ENCODE measurements at regions of chr18 and their contacts with region 1.

Region 1: GRCh38 chr18:59402432-59403090 is 43.5 kb upstream of the LMAN1 start:
- DNase-seq: peak; percentile 33 to 70 (median 43)
- H3K4me3 ChIP-seq: no peak overlapping the region
- H3K4me3 Mint-ChIP-seq: no peak overlapping the region
- H3K27ac ChIP-seq: no peak overlapping the region
- H3K27ac Mint-ChIP-seq: no peak overlapping the region
- H3K4me1 ChIP-seq: no peaks in the 10 kb centered on the region
- H3K4me1 Mint-ChIP-seq: peaks cover 0 to 4% (median 0%) of the 10 kb centered on the region in 3 donors
- H3K27me3 ChIP-seq: no peaks in the 10 kb centered on the region
- H3K27me3 Mint-ChIP-seq: no peaks in the 10 kb centered on the region

Region 2: DNA sequence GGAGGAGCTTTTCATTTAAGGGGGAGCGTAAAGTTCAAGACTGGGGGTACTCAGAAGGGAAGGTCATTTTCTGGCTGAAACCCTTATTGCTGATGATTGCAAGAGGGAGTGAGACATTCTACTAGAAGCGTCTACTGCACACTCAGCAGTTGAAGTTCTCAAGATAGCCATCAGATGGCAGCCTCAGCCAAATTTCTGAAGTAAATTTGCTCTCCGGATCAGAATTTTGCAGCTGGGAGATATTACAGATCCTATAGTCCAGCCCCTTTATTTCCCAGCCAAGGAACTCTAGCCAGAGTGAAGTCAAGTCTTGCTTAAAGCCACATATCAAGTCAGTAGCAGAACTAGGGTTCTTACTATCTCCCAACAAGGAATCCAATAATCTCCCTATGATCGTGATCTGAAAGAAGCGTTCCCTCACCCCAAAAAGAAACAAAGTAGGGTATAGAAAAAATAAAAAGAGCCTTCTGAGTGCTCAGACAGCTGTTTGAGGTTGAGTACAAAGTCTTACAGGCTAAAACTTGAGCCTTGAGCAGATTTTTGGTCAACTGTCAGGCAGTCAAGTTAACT is 153.3 kb before region 1 on chr18:
- CTCF ChIA-PET with region 1: interaction called, 17 read pairs
- POLR2A ChIA-PET with region 1: no interaction called
- DNase-seq: no peak
- H3K4me3 ChIP-seq: no peak overlapping the region
- H3K4me3 Mint-ChIP-seq: no peak overlapping the region
- H3K27ac ChIP-seq: no peak overlapping the region
- H3K27ac Mint-ChIP-seq: no peak overlapping the region
- H3K4me1 ChIP-seq: no peaks in the 10 kb centered on the region
- H3K4me1 Mint-ChIP-seq: no peaks in the 10 kb centered on the region
- H3K27me3 ChIP-seq: no peaks in the 10 kb centered on the region
- H3K27me3 Mint-ChIP-seq: peaks cover 14 to 50% of the 10 kb centered on the region in 2 donors

Region 3: GRCh38 chr18:59308248-59308937 is 94.2 kb before region 1 on chr18:
- CTCF ChIA-PET with region 1: interaction called, 69 read pairs
- POLR2A ChIA-PET with region 1: no interaction called
- DNase-seq: peak; percentile 37 to 59 (median 48)
- H3K4me3 ChIP-seq: no peak overlapping the region
- H3K4me3 Mint-ChIP-seq: peak overlapping the region in 6 of 7 donors; percentile 52 to 84 (median 60)
- H3K27ac ChIP-seq: no peak overlapping the region
- H3K27ac Mint-ChIP-seq: peak overlapping the region in 1 of 8 donors; percentile 60
- H3K4me1 ChIP-seq: no peaks in the 10 kb centered on the region
- H3K4me1 Mint-ChIP-seq: no peaks in the 10 kb centered on the region
- H3K27me3 ChIP-seq: peaks cover 19% of the 10 kb centered on the region
- H3K27me3 Mint-ChIP-seq: peaks cover 14 to 57% of the 10 kb centered on the region in 2 donors

Region 4: GRCh38 chr18:59484837-59485328 is 82.3 kb after region 1 on chr18:
- CTCF ChIA-PET with region 1: no interaction called
- POLR2A ChIA-PET with region 1: no interaction called
- DNase-seq: no peak
- H3K4me3 ChIP-seq: no peak overlapping the region
- H3K4me3 Mint-ChIP-seq: no peak overlapping the region
- H3K27ac ChIP-seq: no peak overlapping the region
- H3K27ac Mint-ChIP-seq: no peak overlapping the region
- H3K4me1 ChIP-seq: no peaks in the 10 kb centered on the region
- H3K4me1 Mint-ChIP-seq: no peaks in the 10 kb centered on the region
- H3K27me3 ChIP-seq: no peaks in the 10 kb centered on the region
- H3K27me3 Mint-ChIP-seq: peaks cover 1 to 5% of the 10 kb centered on the region in 2 donors

Region 5: GRCh38 chr18:59566533-59566971 is 164.0 kb after region 1 on chr18:
- CTCF ChIA-PET with region 1: no interaction called
- POLR2A ChIA-PET with region 1: no interaction called
- DNase-seq: no peak
- H3K4me3 ChIP-seq: no peak overlapping the region
- H3K4me3 Mint-ChIP-seq: no peak overlapping the region
- H3K27ac ChIP-seq: no peak overlapping the region
- H3K27ac Mint-ChIP-seq: no peak overlapping the region
- H3K4me1 ChIP-seq: no peaks in the 10 kb centered on the region
- H3K4me1 Mint-ChIP-seq: no peaks in the 10 kb centered on the region
- H3K27me3 ChIP-seq: no peaks in the 10 kb centered on the region
- H3K27me3 Mint-ChIP-seq: peaks cover 7 to 12% of the 10 kb centered on the region in 2 donors